Esophagus muscularis mucosa (tissue), 4 donors: ENCODE measurements at regions of chr6 and their contacts with region 1.

Region 1: GRCh38 chr6:139973669-139974344 is 599.4 kb upstream of the CITED2 start:
- DNase-seq: no peak
- H3K4me3 ChIP-seq: peak overlapping the region in 1 of 4 donors; percentile 16
- H3K27ac ChIP-seq: peak overlapping the region in 3 of 4 donors; percentile 22 to 55 (median 53)
- H3K4me1 ChIP-seq: peaks cover 24 to 41% (median 35%) of the 10 kb centered on the region in 4 donors
- H3K27me3 ChIP-seq: no peaks in the 10 kb centered on the region
- CTCF ChIP-seq: no peak
- EP300 ChIP-seq: no peak
- POLR2A ChIP-seq: no peak

Region 2: DNA sequence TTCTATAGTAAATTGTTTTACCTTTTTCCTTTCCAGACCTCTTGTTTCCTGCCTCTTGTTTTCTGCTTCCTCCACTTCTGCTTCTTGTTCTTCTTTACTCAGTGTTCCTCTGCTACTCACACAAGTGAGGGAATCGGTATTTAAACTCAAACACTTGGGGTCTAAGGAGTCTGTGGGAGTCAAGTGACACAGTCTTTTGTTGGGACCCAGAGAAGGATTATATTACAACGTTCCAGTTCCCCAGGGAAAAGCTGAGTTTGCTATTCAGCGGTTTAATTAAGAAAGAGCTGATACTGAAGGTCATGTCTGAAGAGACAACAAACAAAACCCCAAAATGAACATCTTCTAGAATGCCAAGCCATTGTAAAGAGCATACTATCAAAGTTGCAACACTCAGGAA is 491.5 kb before region 1 on chr6:
- intact Hi-C with region 1: no loop called
- DNase-seq: no peak
- H3K4me3 ChIP-seq: no peak overlapping the region
- H3K27ac ChIP-seq: no peak overlapping the region
- H3K4me1 ChIP-seq: peaks cover 0 to 15% (median 11%) of the 10 kb centered on the region in 4 donors
- H3K27me3 ChIP-seq: no peaks in the 10 kb centered on the region
- CTCF ChIP-seq: no peak
- EP300 ChIP-seq: no peak
- POLR2A ChIP-seq: no peak

Region 3: GRCh38 chr6:139764498-139764986 is 209.3 kb before region 1 on chr6:
- intact Hi-C with region 1: loop called (anchors 10 kb)
- DNase-seq: no peak
- H3K4me3 ChIP-seq: no peak overlapping the region
- H3K27ac ChIP-seq: peak overlapping the region; percentile 77 to 87 (median 82)
- H3K4me1 ChIP-seq: peaks cover 25 to 40% (median 33%) of the 10 kb centered on the region in 4 donors
- H3K27me3 ChIP-seq: no peaks in the 10 kb centered on the region
- CTCF ChIP-seq: no peak
- EP300 ChIP-seq: no peak
- POLR2A ChIP-seq: no peak

Region 4: DNA sequence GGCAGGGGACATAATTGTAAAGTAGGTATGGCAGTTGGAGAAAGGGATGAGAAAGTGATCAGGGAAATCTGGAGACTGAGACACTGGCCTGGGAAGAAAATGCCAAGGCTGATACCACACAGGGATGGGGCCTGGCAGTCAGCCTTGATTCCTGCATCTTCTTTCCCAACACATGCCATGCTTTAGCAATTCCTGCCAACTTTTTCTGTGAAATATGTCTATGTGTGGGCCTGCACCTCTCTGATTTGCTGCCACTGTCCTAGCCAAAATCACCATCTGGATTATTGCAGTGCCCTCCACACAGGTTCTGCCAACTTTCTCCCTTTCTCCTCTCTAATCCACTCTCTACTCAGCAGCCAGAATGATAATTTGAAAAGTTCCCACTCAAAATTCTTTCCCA is 160.4 kb after region 1 on chr6:
- intact Hi-C with region 1: no loop called
- DNase-seq: no peak
- H3K4me3 ChIP-seq: no peak overlapping the region
- H3K27ac ChIP-seq: no peak overlapping the region
- H3K4me1 ChIP-seq: no peaks in the 10 kb centered on the region
- H3K27me3 ChIP-seq: no peaks in the 10 kb centered on the region
- CTCF ChIP-seq: no peak
- EP300 ChIP-seq: no peak
- POLR2A ChIP-seq: no peak

Region 5: GRCh38 chr6:140590641-140591040 is 616.8 kb after region 1 on chr6:
- intact Hi-C with region 1: no loop called
- DNase-seq: no peak
- H3K4me3 ChIP-seq: no peak overlapping the region
- H3K27ac ChIP-seq: no peak overlapping the region
- H3K4me1 ChIP-seq: no peaks in the 10 kb centered on the region
- H3K27me3 ChIP-seq: no peaks in the 10 kb centered on the region
- CTCF ChIP-seq: no peak
- EP300 ChIP-seq: no peak
- POLR2A ChIP-seq: no peak